Dorsolateral prefrontal cortex (tissue), 120 donors: ENCODE measurements at regions of chr7 and their contacts with region 1.

Region 1: DNA sequence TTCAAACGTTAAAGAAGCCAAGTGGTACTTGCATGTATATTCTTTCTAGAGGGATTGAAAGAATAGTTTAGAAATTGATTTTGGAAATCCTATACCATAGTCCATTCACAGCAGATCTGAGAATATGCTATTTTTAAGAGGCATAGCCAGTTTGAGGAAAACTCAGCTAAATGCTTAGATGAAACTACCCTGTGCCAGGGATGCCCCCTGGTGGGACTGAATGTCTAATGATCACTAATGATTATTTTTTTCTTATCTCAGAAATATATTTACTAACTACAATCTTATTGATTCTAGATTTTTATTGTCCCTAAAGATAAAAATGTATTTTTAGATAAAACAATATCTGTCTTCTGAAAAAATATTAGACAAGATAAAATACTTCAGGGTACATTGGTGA is 844.9 kb upstream of the PHF14 start:
- DNase-seq: peak in 4 of 10 donors; percentile 32 to 72 (median 41)
- H3K4me3 ChIP-seq: no peak overlapping the region
- H3K27ac ChIP-seq: no peak overlapping the region
- H3K27me3 ChIP-seq: no peaks in the 10 kb centered on the region
- CTCF ChIP-seq: peak in 55 of 56 donors; percentile 34 to 90 (median 64)

Region 2: DNA sequence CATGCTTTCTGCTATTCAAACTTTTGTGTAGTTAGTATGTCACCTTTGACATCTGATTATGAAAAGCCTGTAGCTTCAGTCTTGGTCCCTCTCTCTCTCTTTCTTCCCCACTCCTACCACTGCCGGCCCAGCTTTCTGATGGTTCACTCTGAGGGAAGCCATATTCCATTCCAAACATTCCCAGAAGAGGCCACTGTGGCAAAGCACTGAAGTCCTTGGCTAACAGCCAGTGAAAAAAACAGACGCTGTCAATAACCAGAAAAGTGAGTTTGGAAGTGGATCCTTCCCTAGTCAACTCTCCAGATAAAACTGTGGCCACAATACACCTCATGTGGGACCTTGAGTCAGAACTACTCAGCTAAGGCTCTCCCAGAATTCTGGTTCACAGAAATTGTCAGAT is 105.8 kb before region 1 on chr7:
- intact Hi-C with region 1: loop called (anchors 2 to 5 kb)
- DNase-seq: peak in 3 of 10 donors; percentile 13 to 41 (median 32)
- H3K4me3 ChIP-seq: no peak overlapping the region
- H3K27ac ChIP-seq: no peak overlapping the region
- H3K27me3 ChIP-seq: no peaks in the 10 kb centered on the region
- CTCF ChIP-seq: peak in 55 of 56 donors; percentile 19 to 81 (median 58)

Region 3: DNA sequence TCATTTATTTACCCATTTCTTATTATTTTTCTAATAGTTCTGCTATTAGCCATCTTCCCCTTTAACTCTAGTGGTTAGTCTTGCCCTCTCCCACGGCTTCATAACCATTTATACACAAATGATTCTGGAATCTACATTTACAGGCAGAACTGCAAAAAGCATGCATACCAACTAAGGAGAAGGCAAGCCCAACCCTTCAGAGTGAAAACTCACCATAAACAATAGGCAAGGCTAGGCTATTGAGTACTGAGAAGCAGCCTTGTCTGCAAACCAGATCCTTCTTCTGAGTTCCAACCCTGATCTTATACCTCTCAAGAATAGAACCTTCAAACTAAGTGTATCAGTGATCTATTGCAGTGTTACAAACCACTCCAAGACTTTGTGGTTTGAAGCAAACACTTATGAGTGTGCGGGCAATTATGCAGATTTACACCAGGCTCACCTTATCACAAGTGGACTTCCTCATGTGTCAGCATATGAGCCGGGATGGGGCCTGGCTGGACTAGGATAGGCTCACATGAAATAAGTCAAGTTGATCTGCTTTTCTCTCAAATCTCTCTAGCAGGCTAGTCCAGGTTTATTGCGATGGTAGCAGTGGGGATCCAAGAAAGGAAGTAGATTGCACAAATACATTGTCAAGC is 52.0 kb before region 1 on chr7:
- intact Hi-C with region 1: loop called in 1 of 2 experiments (anchors 10 kb)
- DNase-seq: no peak
- H3K4me3 ChIP-seq: no peak overlapping the region
- H3K27ac ChIP-seq: peak overlapping the region in 14 of 59 donors; percentile 0 to 68 (median 43)
- H3K27me3 ChIP-seq: peaks cover 0 to 3% (median 0%) of the 10 kb centered on the region in 45 donors
- CTCF ChIP-seq: no peak

Region 4: GRCh38 chr7:10568917-10569316 is 440.2 kb after region 1 on chr7:
- intact Hi-C with region 1: no loop called
- DNase-seq: no peak
- H3K4me3 ChIP-seq: no peak overlapping the region
- H3K27ac ChIP-seq: no peak overlapping the region
- H3K27me3 ChIP-seq: no peaks in the 10 kb centered on the region
- CTCF ChIP-seq: no peak